Spleen (tissue), 13 donors: ENCODE measurements at regions of chr1 and their contacts with region 1.

Region 1: DNA sequence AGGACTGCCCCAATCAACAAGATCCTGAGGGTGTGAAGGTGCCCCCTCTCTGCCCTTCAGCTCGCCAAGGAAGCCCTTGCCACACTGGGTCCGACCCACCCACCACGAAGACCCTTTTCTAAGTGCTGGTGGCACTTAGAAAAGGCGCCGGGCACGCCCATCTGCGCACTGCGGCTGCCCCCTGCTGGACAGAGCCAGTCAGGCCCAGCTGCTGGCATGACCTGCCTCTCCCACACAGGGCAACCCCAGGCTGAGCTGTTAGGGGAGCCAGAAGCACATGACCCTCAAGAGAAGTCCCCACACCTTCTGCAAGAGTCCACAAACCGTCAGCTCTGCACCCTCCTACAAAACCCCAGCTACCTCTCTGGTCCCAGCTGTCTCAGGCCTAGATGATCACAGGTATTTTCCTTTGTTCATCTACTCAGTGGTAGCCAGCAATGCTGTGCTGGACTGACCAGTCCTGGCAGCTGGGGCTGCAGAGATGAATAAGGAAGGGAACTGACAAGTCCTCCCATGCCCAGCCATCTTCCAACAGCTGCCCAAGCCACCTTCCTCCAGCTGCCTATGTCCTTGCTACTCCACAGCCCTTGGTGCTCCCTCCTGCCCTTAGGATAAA is 40.0 kb upstream of the ZC3H12A start:
- DNase-seq: peak; percentile 93
- H3K4me3 ChIP-seq: no peak overlapping the region
- H3K27ac ChIP-seq: no peak overlapping the region
- H3K4me1 ChIP-seq: peaks cover 0 to 4% (median 0%) of the 10 kb centered on the region in 6 donors
- H3K27me3 ChIP-seq: peaks cover 0 to 60% (median 5%) of the 10 kb centered on the region in 7 donors
- CTCF ChIP-seq: peak; percentile 70 to 93 (median 88)
- POLR2A ChIP-seq: no peak

Region 2: DNA sequence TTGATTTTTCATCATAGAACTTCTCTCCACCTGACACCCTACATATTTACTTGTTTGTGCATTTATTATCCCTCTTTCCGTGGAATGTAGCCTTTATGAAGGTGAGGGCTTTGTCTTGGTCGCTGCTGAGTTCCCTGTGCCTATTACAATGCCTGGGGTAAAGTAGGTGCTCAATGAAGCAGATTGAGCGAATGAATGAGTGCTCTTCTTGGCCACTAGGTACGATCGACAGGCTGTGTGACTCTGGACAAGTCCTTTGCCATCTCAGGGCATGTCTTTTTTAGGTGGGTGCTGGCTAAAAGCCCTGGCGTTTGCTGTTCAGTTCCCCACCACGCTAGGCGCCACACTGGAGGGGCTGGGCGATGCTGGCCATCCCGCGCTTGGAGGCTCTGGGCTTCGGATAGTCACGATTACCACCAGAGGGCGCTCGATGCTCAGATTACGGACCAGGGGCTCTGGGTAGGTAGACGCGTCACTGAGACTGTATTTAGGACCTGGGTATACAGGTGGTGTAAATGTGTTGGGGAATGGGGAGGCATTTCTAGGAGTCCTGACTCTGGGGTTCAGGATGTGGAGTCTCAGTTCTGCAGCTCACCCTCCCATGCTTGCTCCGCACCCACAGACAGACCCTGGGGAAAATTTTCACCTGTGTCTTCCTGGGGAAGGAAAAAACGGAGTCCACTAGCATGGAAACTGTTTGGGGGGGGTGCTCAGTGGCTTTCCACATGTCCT is 880.6 kb before region 1 on chr1:
- intact Hi-C with region 1: loop called (anchors 10 kb)
- DNase-seq: peak; percentile 89
- H3K4me3 ChIP-seq: no peak overlapping the region
- H3K27ac ChIP-seq: no peak overlapping the region
- H3K4me1 ChIP-seq: no peaks in the 10 kb centered on the region
- H3K27me3 ChIP-seq: peaks cover 0 to 52% (median 20%) of the 10 kb centered on the region in 7 donors
- CTCF ChIP-seq: peak; percentile 19 to 84 (median 56)
- POLR2A ChIP-seq: no peak

Region 3: GRCh38 chr1:36988741-36989193 is 445.6 kb before region 1 on chr1:
- intact Hi-C with region 1: no loop called
- DNase-seq: no peak
- H3K4me3 ChIP-seq: no peak overlapping the region
- H3K27ac ChIP-seq: no peak overlapping the region
- H3K4me1 ChIP-seq: peaks cover 0 to 18% (median 6%) of the 10 kb centered on the region in 6 donors
- H3K27me3 ChIP-seq: peaks cover 0 to 73% (median 0%) of the 10 kb centered on the region in 7 donors
- CTCF ChIP-seq: no peak
- POLR2A ChIP-seq: no peak